Right ventricle myocardium inferior (tissue), 1 donor: ENCODE measurements at regions of chr4 and their contacts with region 1.

Region 1: GRCh38 chr4:2891294-2891693 is 47.6 kb downstream of the ADD1 start:
- DNase-seq: no peak
- ATAC-seq: no peak

Region 2: GRCh38 chr4:2843263-2843940 is 47.9 kb before region 1 on chr4 and contains the start of gene ADD1:
- intact Hi-C with region 1: loop called (anchors 5 kb)
- DNase-seq: peak; percentile 94
- ATAC-seq: peak; percentile 99
- total RNA-seq, gene ADD1: 231 TPM

Region 3: GRCh38 chr4:2852481-2852921 is 38.8 kb before region 1 on chr4:
- intact Hi-C with region 1: loop called (anchors 5 kb)
- DNase-seq: no peak
- ATAC-seq: peak; percentile 80

Region 4: GRCh38 chr4:2934813-2935761 is 43.8 kb after region 1 on chr4:
- intact Hi-C with region 1: loop called (anchors 5 kb)
- DNase-seq: peak; percentile 96
- ATAC-seq: peak; percentile 80